ENCODE measurements at regions of chr19 and their contacts with region 1.

Region 1: GRCh38 chr19:8261347-8262310 is 46.5 kb downstream of the CD320 start:
- DNase-seq: no peak
- H3K4me3 ChIP-seq: no peak overlapping the region
- H3K27ac ChIP-seq: no peak overlapping the region
- H3K4me1 ChIP-seq: no peaks in the 10 kb centered on the region
- H3K27me3 ChIP-seq: no peaks in the 10 kb centered on the region
- CTCF ChIP-seq: no peak

Region 2: DNA sequence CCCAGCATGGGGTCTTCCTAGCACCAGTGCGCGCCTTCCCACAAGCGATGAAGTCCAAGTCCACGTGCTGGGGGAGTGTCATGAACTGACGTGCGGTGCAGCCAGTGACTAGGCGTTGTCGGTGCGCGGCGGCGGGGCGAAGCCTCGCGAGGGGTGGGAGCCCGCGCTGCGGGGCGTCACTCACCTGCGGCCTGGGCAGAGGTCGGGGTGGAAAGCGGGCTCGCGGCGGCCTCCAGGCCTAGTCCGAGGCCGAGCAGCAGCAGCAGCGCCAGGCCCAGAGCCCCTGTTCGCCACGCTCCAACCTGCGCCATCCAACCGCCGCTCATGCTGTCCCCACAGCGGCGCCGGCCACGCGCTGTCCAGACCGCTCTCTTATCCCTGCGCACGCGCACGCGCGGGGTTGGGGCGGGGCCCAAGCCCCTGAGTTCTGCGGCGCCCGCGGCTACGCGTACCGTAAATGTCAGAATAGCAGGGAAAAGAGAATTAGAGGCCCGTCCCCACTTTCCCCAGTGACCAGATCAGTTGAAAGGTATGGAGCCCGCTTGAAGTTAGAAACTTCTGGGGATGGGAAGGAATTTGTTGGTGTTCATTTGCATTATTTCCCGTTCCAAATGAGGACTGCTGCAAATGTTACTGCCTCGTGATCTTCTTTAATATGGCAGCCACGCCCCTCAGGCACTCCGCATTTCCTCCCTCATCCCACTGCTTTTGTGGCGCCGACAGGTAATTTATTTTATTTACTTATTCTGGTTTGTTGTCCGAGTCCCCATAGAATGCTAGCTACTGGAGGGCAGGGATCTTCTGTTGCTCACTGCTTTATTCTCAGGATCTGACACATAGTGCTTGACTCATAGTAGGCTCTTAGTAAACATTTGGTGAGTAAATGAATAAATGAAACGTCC is 46.6 kb after region 1 on chr19 and contains the start of gene CD320:
- CTCF ChIA-PET with region 1: interaction called, 13 read pairs
- dilution Hi-C with region 1: no loop called
- in situ Hi-C with region 1: no loop called
- intact Hi-C with region 1: no loop called
- DNase-seq: peak; percentile 86
- H3K4me3 ChIP-seq: peak within 1 kb of the TSS; percentile 51 to 63 (median 61)
- H3K27ac ChIP-seq: peak within 1 kb of the TSS; percentile 42
- H3K4me1 ChIP-seq: peaks cover 14% of the 10 kb centered on the region
- H3K27me3 ChIP-seq: no peaks in the 10 kb centered on the region
- CTCF ChIP-seq: no peak
- total RNA-seq, gene CD320: 8.0 to 31.0 TPM

Region 3: GRCh38 chr19:8505680-8506401 is 244.2 kb after region 1 on chr19:
- CTCF ChIA-PET with region 1: no interaction called
- dilution Hi-C with region 1: no loop called
- in situ Hi-C with region 1: no loop called
- intact Hi-C with region 1: loop called (anchors 10 kb)
- DNase-seq: peak; percentile 52
- H3K4me3 ChIP-seq: peak overlapping the region; percentile 57 to 72 (median 57)
- H3K27ac ChIP-seq: no peak overlapping the region
- H3K4me1 ChIP-seq: peaks cover 9% of the 10 kb centered on the region
- H3K27me3 ChIP-seq: no peaks in the 10 kb centered on the region
- CTCF ChIP-seq: peak; percentile 55 to 88

Region 4: DNA sequence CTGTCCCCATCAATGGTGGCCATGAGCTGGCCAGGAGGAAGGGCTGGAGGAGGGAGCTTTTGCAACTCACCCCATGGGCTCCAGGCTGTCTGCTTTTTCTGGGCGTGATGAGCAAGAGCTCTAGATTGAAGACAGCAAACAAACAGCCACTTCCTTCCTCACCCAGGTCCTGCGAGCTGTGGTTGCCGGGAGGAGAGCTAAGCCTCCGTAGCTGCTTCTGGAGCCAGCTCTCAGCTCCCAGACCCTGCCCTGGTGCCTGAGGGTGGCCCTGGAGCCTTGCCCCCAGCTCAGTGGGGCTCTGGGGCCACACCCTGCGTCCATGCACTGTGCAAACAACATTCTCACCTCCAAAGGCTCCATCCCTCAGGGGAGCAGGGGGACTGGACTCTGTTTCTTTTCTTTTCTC is 309.4 kb after region 1 on chr19:
- CTCF ChIA-PET with region 1: interaction called, 12 read pairs
- dilution Hi-C with region 1: no loop called
- in situ Hi-C with region 1: no loop called
- intact Hi-C with region 1: loop called (anchors 5 kb)
- DNase-seq: no peak
- H3K4me3 ChIP-seq: no peak overlapping the region
- H3K27ac ChIP-seq: no peak overlapping the region
- H3K4me1 ChIP-seq: peaks cover 7% of the 10 kb centered on the region
- H3K27me3 ChIP-seq: no peaks in the 10 kb centered on the region
- CTCF ChIP-seq: no peak

Region 5: DNA sequence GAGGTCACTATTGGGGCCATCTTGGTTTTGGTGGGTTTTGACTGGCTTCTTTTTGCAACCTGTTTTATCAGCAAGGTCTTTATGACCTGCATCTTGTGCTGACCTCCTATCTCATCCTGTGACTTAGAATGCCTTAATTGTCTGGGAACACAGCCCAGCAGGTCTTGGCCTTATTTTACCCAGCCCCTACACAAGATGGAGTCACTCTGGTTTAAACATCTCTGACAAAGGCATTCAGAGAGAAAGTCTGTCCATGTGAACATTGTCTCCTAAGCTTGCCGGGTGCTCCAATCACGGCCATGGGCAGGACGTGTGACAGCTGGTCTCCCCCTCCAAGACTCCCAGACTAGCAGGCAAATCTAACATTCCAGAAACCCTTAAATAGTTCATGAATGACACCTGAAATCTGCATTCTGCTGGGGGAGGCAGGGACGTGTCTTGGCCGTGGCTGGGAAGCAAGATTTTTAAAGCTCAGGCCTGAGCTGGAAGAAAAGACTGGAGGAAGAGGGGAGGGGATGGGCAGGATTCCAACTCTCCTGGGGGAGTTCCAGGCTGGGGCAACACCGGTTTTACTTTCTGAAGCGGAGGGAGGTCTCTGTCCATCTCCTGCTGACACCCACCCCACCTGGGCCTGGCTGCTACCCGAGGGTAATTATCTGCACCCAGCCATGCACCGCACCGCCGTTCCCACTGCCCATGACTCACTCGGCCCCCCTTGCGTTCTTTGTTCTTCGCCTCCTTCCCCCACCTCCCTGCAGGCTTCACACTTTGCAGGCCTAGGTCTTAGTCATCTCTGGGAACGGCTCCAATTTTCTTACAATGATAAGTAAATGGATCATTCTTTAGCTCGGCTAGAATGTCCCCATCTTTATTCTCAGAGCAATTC is 813.7 kb after region 1 on chr19:
- CTCF ChIA-PET with region 1: no interaction called
- dilution Hi-C with region 1: no loop called
- in situ Hi-C with region 1: no loop called
- intact Hi-C with region 1: loop called (anchors 10 kb)
- DNase-seq: peak; percentile 98
- H3K4me3 ChIP-seq: no peak overlapping the region
- H3K27ac ChIP-seq: peak overlapping the region; percentile 24
- H3K4me1 ChIP-seq: peaks cover 9% of the 10 kb centered on the region
- H3K27me3 ChIP-seq: no peaks in the 10 kb centered on the region
- CTCF ChIP-seq: no peak